GM23248 (cell line): ENCODE measurements at regions of chr17 and their contacts with region 1.

Region 1: DNA sequence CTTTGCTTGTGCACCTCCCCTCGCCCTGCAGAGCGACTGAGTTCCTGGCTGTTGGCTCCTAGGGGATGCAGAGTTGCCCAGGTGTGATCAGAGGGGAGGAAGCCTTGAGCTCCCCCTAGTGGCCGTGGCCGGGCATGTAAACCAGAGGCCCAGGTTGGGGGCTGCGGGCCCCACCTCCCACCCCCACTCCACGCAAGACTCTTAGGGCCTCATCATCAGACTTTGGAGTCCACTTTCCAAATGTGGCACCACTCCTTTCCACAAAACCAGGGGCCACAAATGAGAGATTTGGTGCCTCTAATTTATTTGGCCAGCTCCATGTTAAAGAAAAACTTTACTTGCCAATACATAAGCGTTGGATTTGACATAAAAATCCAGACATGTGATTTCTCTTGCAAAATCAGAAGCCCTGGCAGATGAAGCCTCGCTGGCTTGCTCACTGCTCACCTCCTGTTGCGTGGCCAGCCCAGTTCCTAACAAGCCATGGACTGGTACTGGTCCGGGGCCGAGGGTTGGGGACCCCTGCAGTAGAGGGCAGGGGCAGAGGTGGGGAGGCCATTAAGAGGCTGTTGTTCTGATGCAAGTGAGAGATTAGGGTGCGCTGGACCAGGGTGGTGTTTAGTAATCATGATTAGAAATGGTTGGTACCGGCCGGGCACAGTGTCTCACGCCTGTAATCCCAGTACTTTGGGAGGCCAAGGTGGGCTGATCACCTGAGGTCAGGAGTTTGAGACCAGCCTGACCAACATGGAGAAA is 28.7 kb upstream of the GAS7 start:
- DNase-seq: peak; percentile 48
- H3K4me3 ChIP-seq: no peak overlapping the region
- H3K27ac ChIP-seq: no peak overlapping the region
- H3K4me1 ChIP-seq: no peaks in the 10 kb centered on the region
- H3K27me3 ChIP-seq: no peaks in the 10 kb centered on the region

Region 2: GRCh38 chr17:9968902-9969617 is 258.0 kb before region 1 on chr17:
- in situ Hi-C with region 1: loop called (anchors 10 kb)
- DNase-seq: peak; percentile 77
- H3K4me3 ChIP-seq: no peak overlapping the region
- H3K27ac ChIP-seq: no peak overlapping the region
- H3K4me1 ChIP-seq: peaks cover 25% of the 10 kb centered on the region
- H3K27me3 ChIP-seq: no peaks in the 10 kb centered on the region